ENCODE measurements at regions of chr12 and their contacts with region 1.

Region 1: GRCh38 chr12:48189331-48190125 is 6.1 kb downstream of the CCDC184 start:
- H3K4me3 Mint-ChIP-seq: no peak overlapping the region
- H3K27ac Mint-ChIP-seq: no peak overlapping the region
- H3K4me1 Mint-ChIP-seq: peaks cover 3% of the 10 kb centered on the region
- H3K27me3 Mint-ChIP-seq: peaks cover 40% of the 10 kb centered on the region

Region 2: GRCh38 chr12:48454667-48455066 is 265.1 kb after region 1 on chr12:
- intact Hi-C with region 1: loop called (anchors 5 kb)
- H3K4me3 Mint-ChIP-seq: no peak overlapping the region
- H3K27ac Mint-ChIP-seq: no peak overlapping the region
- H3K4me1 Mint-ChIP-seq: no peaks in the 10 kb centered on the region
- H3K27me3 Mint-ChIP-seq: peaks cover 5% of the 10 kb centered on the region